Panc1 (cell line): ENCODE measurements at regions of chr16 and their contacts with region 1.

Region 1: GRCh38 chr16:70402916-70403659 is 35.8 kb downstream of the ST3GAL2 start:
- DNase-seq: no peak
- ATAC-seq: no peak
- H3K4me3 ChIP-seq: no peak overlapping the region
- H3K27ac ChIP-seq: no peak overlapping the region
- H3K4me1 ChIP-seq: peaks cover 7% of the 10 kb centered on the region
- H3K27me3 ChIP-seq: no peaks in the 10 kb centered on the region
- CTCF ChIP-seq: no peak

Region 2: DNA sequence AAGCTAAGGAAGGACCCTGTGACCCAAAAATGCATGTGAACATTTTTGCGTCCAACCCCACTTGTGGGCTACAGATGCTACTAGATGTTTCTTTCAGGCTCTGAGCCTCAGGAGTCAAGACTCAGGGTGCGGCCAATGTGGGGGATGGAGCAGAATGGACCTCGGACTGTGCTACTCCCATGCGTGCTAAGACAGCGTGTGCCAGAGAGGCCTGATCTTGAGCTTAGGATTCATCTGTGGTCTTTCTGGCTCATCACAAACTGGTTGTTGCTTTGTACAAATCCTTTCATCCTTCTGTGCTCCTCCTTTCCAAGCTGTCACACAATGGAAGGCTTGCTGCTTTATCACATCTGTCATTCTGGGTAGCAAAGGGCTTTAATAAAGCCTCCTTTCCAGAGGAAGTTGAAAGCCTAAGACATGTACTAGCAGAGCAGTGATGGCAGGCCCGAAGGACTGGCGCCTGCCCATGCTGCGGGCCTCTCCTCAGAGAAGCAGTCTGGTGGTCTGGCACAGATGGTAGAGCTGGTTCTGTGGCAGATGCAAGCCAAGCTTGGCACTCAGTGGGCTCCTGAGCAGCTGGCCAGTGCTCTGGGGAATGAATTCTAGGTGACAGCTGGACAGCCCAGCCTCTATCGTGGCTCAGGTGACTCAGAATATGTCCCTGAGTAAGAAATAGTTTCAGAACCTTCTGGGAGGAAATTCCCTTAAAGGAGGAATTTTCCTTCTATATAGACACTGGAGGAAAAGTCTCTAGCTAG is 92.5 kb after region 1 on chr16:
- CTCF ChIA-PET with region 1: no interaction called
- POLR2A ChIA-PET with region 1: interaction called, 10 read pairs
- in situ Hi-C with region 1: no loop called
- intact Hi-C with region 1: no loop called
- DNase-seq: no peak
- ATAC-seq: no peak
- H3K4me3 ChIP-seq: no peak overlapping the region
- H3K27ac ChIP-seq: no peak overlapping the region
- H3K4me1 ChIP-seq: no peaks in the 10 kb centered on the region
- H3K27me3 ChIP-seq: no peaks in the 10 kb centered on the region
- CTCF ChIP-seq: no peak